Activated CD4-positive, alpha-beta memory T cell treated with anti-CD3 and anti-CD28 coated beads for 36 hours (primary cell): ENCODE measurements at regions of chr13 and their contacts with region 1.

Region 1: GRCh38 chr13:49569956-49570689 is 15.2 kb downstream of the RCBTB1 start:
- DNase-seq: peak; percentile 43
- H3K4me3 Mint-ChIP-seq: no peak overlapping the region
- H3K27ac Mint-ChIP-seq: peak overlapping the region; percentile 88
- H3K4me1 Mint-ChIP-seq: peaks cover 33% of the 10 kb centered on the region
- H3K27me3 Mint-ChIP-seq: no peaks in the 10 kb centered on the region

Region 2: DNA sequence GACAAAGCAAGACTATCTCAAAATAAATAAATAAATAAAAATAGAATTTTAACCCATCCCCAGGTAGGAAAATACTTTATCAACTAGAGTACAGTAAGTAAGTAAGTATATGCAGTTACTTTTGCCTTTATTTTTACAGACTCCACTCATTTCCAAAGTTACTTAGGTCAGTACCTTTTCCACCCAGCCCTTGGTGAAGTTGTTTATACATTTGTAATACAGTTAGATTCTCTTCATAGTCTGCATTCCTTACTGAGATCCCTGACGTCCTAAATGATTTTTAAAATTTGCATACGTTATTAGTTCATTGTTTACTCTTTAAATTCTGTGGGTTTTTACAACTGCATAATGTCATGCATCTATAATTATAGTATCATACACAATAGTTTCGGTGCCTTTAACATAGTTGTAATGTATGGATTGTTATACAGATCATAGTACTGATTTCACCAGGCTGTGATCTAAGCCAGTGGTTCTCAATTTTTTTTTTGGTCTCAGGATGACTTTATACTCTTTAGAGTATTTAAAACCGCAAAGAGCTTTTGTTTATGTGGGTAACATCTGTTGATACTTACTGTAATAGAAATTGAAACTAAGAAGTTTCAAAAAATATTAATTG is 115.6 kb before region 1 on chr13:
- CTCF ChIA-PET with region 1: no interaction called
- POLR2A ChIA-PET with region 1: no interaction called
- intact Hi-C with region 1: loop called (anchors 2 kb)
- DNase-seq: no peak
- H3K4me3 Mint-ChIP-seq: no peak overlapping the region
- H3K27ac Mint-ChIP-seq: peak overlapping the region; percentile 79
- H3K4me1 Mint-ChIP-seq: peaks cover 35% of the 10 kb centered on the region
- H3K27me3 Mint-ChIP-seq: no peaks in the 10 kb centered on the region